Natural killer cell (primary cell): ENCODE measurements at regions of chr1 and their contacts with region 1.

Region 1: GRCh38 chr1:231211005-231211857 is 29.8 kb upstream of the GNPAT start:
- DNase-seq: peak; percentile 76 to 93
- ATAC-seq: peak; percentile 92 to 95 (median 95)
- H3K4me3 ChIP-seq: peak overlapping the region; percentile 31
- H3K4me3 Mint-ChIP-seq: peak overlapping the region; percentile 87
- H3K27ac ChIP-seq: peak overlapping the region; percentile 28
- H3K27ac Mint-ChIP-seq: peak overlapping the region; percentile 58 to 91
- H3K4me1 ChIP-seq: peaks cover 15% of the 10 kb centered on the region
- H3K4me1 Mint-ChIP-seq: peaks cover 8 to 10% of the 10 kb centered on the region in 2 donors
- H3K27me3 ChIP-seq: no peaks in the 10 kb centered on the region
- H3K27me3 Mint-ChIP-seq: no peaks in the 10 kb centered on the region
- CTCF ChIP-seq: peak; percentile 91

Region 2: GRCh38 chr1:230642263-230642959 is 568.8 kb before region 1 on chr1 and contains the start of gene COG2:
- intact Hi-C with region 1: loop called (anchors 5 kb)
- DNase-seq: peak; percentile 96 to 99
- ATAC-seq: peak; percentile 91 to 99 (median 92)
- H3K4me3 ChIP-seq: peak within 1 kb of the TSS; percentile 77
- H3K4me3 Mint-ChIP-seq: peak within 1 kb of the TSS; percentile 98
- H3K27ac ChIP-seq: peak within 1 kb of the TSS; percentile 77
- H3K27ac Mint-ChIP-seq: peak within 1 kb of the TSS; percentile 93 to 95
- H3K4me1 ChIP-seq: peaks cover 21% of the 10 kb centered on the region
- H3K4me1 Mint-ChIP-seq: peaks cover 43 to 52% of the 10 kb centered on the region in 2 donors
- H3K27me3 ChIP-seq: peaks cover 5% of the 10 kb centered on the region
- H3K27me3 Mint-ChIP-seq: peaks cover 17 to 21% of the 10 kb centered on the region in 2 donors
- CTCF ChIP-seq: peak; percentile 100
- total RNA-seq, gene COG2: 15.8 to 24.1 (median 17.5) TPM